ENCODE measurements at regions of chr12 and their contacts with region 1.

Region 1: DNA sequence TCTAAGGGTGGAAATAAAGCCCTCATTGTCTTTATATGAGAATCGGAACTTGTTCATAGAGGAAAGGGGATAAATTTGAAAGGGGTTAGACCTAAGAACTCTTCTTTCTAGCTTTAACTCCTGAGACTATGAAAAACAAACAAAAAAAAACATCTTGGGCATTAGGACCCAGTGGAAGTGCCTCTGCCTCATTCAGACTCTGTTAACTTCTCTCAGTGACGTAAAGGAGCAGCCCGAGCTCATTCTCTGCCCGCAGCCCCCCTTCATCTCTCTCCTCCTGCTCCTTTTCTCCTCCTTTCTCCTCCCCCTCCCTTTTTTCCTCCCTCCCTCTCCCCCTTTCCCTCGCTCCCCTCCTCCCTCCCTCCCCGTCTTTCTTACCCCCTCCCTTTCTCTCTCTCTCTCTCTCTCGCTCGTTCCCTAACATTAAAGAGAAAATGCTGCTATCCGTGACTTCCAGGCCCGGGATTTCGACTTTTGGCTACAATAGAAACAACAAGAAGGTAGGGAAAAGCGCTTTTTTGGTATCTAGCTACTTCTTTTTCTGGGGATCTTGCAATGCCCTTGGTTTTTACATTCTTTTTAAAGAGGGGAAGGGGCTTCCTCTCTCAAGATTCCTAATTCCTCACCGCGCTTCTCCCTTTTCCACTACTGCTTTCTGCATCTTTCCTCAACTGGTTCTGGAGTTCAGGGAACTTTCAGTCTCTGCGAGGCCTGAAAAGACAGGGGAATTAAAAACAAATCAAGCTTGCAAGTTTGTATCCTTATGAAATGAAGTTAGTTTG is at the start of gene RBMS2:
- DNase-seq: peak; percentile 80
- H3K4me3 ChIP-seq: peak within 1 kb of the TSS; percentile 29 to 63 (median 46)
- H3K27ac ChIP-seq: peak within 1 kb of the TSS; percentile 87 to 91 (median 88)
- H3K4me1 ChIP-seq: peaks cover 0 to 56% (median 17%) of the 10 kb centered on the region in 4 donors
- H3K27me3 ChIP-seq: no peaks in the 10 kb centered on the region
- CTCF ChIP-seq: no peak
- EP300 ChIP-seq: no peak
- POLR2A ChIP-seq: no peak
- total RNA-seq, gene RBMS2: 17.3 to 55.1 (median 25.2) TPM

Region 2: DNA sequence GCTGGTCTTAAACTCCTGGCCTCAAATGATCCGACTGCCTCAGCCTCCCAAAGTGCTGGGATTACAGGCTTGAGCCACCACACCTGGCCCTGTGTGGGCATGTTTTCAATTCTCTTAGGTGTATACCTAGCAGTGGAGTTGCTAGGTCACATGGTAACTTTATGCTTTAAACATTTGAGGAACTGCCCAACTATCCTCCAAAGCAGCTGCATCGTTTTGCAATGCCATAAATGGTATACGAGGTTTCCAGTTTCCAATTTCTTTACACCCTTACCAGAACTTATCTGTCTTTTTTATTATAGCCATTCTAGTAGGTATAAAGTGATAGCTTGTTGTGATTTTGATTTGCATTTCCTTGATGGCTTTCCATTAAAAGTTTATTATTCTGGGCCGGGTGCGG is 24.9 kb after region 1 on chr12:
- in situ Hi-C with region 1: no loop called
- intact Hi-C with region 1: loop called (anchors 1 kb)
- DNase-seq: no peak
- H3K4me3 ChIP-seq: no peak overlapping the region
- H3K27ac ChIP-seq: peak overlapping the region in 3 of 4 donors; percentile 8 to 42 (median 26)
- H3K4me1 ChIP-seq: peaks cover 0 to 5% (median 1%) of the 10 kb centered on the region in 4 donors
- H3K27me3 ChIP-seq: no peaks in the 10 kb centered on the region
- CTCF ChIP-seq: no peak
- EP300 ChIP-seq: no peak
- POLR2A ChIP-seq: no peak

Region 3: GRCh38 chr12:56571126-56571525 is 49.3 kb after region 1 on chr12:
- in situ Hi-C with region 1: loop called in 2 of 4 experiments (anchors 10 kb)
- intact Hi-C with region 1: no loop called
- DNase-seq: no peak
- H3K4me3 ChIP-seq: no peak overlapping the region
- H3K27ac ChIP-seq: peak overlapping the region; percentile 47 to 63 (median 56)
- H3K4me1 ChIP-seq: peaks cover 6 to 27% (median 7%) of the 10 kb centered on the region in 4 donors
- H3K27me3 ChIP-seq: no peaks in the 10 kb centered on the region
- CTCF ChIP-seq: no peak
- EP300 ChIP-seq: no peak
- POLR2A ChIP-seq: no peak

Region 4: DNA sequence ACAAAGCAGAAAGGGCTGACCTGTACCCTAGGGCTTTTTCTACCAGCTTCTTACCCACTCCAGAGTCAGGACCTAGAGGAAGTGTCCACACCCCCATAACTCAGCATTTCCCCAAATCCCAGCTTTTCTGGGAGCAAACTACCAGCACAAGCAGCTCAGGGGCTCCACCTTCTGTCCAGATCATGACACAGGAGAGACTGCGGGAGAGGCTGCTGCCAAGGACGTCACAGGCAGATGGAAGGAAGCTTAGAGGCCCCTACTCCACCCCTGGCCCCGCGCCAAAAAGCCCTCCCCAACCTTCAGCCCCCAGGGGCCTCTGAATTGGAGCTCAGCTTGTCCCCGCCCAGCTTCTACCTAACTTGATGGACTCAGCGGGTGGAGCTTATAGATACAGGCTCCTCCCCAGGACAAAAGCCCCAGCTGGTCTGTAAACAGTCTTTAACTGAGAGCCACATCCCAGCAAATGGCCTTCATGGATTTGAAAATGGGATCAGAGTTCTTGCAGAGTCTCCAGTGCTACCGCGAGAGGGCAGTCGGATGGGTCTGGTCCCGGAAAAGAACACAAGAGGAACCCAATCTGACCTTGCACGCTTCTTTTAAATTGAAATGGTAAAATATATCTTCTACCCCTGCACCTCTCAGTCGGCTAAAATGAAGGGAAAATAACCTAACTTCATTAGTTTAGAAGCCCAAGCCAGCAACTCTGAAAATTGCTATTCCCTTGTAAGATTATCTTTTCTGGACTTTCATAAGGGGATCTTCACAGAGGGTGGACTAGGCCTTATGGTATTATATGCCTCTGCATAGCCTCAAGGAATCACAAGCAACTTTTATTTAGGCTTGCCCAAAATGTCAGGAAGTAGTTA is 115.1 kb after region 1 on chr12:
- in situ Hi-C with region 1: no loop called
- intact Hi-C with region 1: loop called (anchors 2 kb)
- DNase-seq: peak; percentile 100
- H3K4me3 ChIP-seq: peak overlapping the region; percentile 15 to 96 (median 81)
- H3K27ac ChIP-seq: peak overlapping the region; percentile 95 to 99 (median 96)
- H3K4me1 ChIP-seq: peaks cover 26 to 56% (median 43%) of the 10 kb centered on the region in 4 donors
- H3K27me3 ChIP-seq: no peaks in the 10 kb centered on the region
- CTCF ChIP-seq: peak; percentile 50 to 74 (median 54)
- EP300 ChIP-seq: no peak
- POLR2A ChIP-seq: peak; percentile 26

Measured in transverse colon (tissue), 4 donors.